ENCODE measurements at regions of chr4 and their contacts with region 1.

Region 1: DNA sequence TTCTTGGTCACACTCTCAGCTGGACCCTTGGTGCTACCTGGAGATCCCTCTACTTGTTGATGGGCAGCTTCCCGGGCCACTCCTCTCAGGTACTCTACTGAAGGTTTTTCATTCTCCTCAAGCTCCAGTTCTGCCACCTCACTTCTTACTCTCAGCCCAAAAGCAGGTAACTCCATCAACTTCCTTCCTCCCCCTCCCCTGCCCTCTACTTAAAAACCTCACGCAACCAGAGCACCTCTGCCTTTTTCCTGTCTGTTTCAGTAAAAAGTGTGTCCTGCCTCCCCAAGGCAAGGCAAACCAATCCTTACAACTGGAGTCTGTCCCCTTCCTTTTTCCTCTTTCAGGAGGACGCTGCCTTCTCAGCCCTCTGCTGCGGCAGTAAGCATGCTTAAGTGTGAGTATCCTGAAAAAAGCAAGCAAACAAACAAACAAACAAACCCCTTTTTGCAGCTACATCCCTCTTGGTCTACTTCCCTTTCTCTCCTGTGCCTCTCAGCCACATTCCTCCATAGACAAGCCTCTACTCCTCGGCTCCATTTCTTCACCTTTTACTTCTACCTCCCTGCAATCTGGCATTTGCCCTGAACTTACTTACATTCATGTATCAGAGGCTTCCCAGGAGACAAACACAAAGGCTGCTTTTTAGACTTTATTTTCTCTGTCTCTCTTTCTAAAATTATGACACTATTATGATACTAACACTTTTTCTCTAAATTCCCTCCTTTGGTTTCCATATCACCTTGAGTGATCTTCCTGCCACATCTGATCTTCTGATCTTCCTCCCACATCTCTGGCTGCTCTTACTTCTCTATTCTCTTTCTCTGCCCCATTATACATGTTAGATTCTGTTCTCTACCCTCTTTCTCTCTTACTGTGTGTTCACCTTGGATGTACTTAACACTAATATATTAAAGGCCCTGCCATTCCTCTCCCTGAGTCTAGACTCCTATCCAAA is 5.4 kb downstream of the ALPK1 start:
- DNase-seq: peak; percentile 29
- H3K4me3 Mint-ChIP-seq: no peak overlapping the region
- H3K27ac Mint-ChIP-seq: no peak overlapping the region
- H3K4me1 Mint-ChIP-seq: peaks cover 21% of the 10 kb centered on the region
- H3K27me3 Mint-ChIP-seq: no peaks in the 10 kb centered on the region

Region 2: DNA sequence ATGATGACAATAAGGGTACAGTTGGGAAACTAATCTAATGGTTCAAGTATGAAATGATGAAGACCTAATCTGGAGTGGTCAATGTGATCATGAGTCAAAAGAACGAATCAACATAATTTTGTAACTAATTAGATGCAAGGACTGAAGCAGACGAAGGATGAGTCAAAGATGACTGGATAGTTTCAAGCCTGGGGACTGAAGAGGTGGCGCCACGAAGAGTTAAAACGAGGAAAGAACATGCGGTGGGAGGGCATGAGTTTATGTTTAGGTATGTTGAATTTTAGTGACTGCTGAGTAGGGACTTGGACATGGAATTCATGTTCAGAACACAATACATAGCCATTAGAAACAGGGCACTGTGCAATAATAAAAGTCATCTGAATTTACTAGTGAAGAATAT is 378.8 kb before region 1 on chr4:
- CTCF ChIA-PET with region 1: no interaction called
- POLR2A ChIA-PET with region 1: no interaction called
- intact Hi-C with region 1: no loop called
- DNase-seq: no peak
- H3K4me3 Mint-ChIP-seq: no peak overlapping the region
- H3K27ac Mint-ChIP-seq: no peak overlapping the region
- H3K4me1 Mint-ChIP-seq: no peaks in the 10 kb centered on the region
- H3K27me3 Mint-ChIP-seq: no peaks in the 10 kb centered on the region

Region 3: DNA sequence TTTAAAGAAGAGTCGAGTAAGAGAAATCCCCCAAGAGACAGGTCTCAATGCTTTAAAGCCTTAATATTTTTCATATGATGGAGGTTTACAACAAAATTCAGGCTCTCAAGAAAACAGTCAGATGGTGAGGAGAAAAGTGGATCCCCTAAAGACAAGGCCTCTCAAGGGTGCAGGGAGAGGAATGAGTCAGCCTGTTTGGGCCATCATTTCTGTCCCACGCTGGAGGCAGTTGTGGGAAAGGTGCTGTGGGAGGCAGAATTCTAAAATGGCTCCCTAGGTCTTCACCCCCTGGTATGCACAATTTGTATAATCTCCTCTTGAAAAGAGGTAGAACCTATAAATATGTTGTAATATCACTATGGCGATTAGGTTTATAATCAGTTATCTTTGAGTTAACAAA is 12.3 kb before region 1 on chr4:
- CTCF ChIA-PET with region 1: interaction called, 4 read pairs
- POLR2A ChIA-PET with region 1: interaction called, 6 read pairs
- intact Hi-C with region 1: loop called (anchors 1 kb)
- DNase-seq: peak; percentile 78
- H3K4me3 Mint-ChIP-seq: no peak overlapping the region
- H3K27ac Mint-ChIP-seq: peak overlapping the region; percentile 97
- H3K4me1 Mint-ChIP-seq: peaks cover 40% of the 10 kb centered on the region
- H3K27me3 Mint-ChIP-seq: no peaks in the 10 kb centered on the region

Measured in activated CD4-positive, alpha-beta memory T cell treated with anti-CD3 and anti-CD28 coated beads for 36 hours (primary cell).